AG04450 (cell line): ENCODE measurements at regions of chr2 and their contacts with region 1.

Region 1: DNA sequence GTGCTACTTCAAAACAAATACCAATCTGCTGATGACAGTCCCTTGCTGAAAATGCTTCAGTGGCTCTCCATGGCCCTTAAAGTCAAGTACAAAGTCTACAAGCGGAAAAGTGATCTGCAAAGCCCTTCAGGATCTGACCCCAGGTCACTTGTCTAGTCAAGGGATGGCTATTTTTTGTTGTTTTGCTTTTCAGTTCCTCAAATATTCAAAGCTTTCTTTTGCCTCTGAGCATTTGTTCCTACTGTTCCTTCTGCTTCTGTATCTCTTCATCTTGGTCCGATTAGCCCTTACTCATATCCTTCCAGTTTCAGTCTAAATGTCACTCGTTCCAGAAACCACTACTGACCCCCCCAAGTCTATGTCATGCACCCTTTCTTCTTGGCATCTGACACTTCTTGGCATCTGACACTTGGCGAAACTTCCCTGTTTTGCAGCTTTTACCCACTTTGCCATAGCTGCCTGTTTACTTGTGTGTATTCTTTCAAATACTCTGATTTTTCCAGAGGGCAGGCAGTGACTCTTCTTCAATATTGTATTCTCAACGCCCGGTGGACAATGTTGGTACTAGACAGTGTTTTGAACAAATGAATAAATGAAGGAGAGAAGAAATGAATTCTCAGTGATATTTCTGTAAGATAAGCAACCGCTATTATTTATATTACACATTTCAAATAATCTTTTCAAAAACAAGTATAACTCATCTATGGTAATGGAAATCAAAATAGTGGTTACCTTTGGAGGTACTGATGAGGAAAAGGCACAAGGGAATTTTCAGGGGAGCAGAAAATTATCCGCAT is 175.9 kb upstream of the FN1 start:
- DNase-seq: no peak
- H3K4me3 ChIP-seq: no peak overlapping the region
- H3K27ac ChIP-seq: no peak overlapping the region
- H3K27me3 ChIP-seq: no peaks in the 10 kb centered on the region
- CTCF ChIP-seq: no peak

Region 2: GRCh38 chr2:215517391-215517790 is 94.4 kb before region 1 on chr2:
- CTCF ChIA-PET with region 1: no interaction called
- POLR2A ChIA-PET with region 1: no interaction called
- DNase-seq: no peak
- H3K4me3 ChIP-seq: no peak overlapping the region
- H3K27ac ChIP-seq: no peak overlapping the region
- H3K27me3 ChIP-seq: no peaks in the 10 kb centered on the region
- CTCF ChIP-seq: no peak

Region 3: GRCh38 chr2:215624423-215624829 is 12.6 kb after region 1 on chr2:
- CTCF ChIA-PET with region 1: no interaction called
- POLR2A ChIA-PET with region 1: interaction called, 11 read pairs
- DNase-seq: peak; percentile 97
- H3K4me3 ChIP-seq: no peak overlapping the region
- H3K27ac ChIP-seq: peak overlapping the region; percentile 87
- H3K27me3 ChIP-seq: no peaks in the 10 kb centered on the region
- CTCF ChIP-seq: no peak

Region 4: GRCh38 chr2:215828517-215829184 is 216.8 kb after region 1 on chr2:
- CTCF ChIA-PET with region 1: interaction called, 13 read pairs
- POLR2A ChIA-PET with region 1: no interaction called
- DNase-seq: no peak
- H3K4me3 ChIP-seq: no peak overlapping the region
- H3K27ac ChIP-seq: no peak overlapping the region
- H3K27me3 ChIP-seq: no peaks in the 10 kb centered on the region
- CTCF ChIP-seq: peak; percentile 59